HEK293 (cell line): ENCODE measurements at regions of chr19 and their contacts with region 1.

Region 1: DNA sequence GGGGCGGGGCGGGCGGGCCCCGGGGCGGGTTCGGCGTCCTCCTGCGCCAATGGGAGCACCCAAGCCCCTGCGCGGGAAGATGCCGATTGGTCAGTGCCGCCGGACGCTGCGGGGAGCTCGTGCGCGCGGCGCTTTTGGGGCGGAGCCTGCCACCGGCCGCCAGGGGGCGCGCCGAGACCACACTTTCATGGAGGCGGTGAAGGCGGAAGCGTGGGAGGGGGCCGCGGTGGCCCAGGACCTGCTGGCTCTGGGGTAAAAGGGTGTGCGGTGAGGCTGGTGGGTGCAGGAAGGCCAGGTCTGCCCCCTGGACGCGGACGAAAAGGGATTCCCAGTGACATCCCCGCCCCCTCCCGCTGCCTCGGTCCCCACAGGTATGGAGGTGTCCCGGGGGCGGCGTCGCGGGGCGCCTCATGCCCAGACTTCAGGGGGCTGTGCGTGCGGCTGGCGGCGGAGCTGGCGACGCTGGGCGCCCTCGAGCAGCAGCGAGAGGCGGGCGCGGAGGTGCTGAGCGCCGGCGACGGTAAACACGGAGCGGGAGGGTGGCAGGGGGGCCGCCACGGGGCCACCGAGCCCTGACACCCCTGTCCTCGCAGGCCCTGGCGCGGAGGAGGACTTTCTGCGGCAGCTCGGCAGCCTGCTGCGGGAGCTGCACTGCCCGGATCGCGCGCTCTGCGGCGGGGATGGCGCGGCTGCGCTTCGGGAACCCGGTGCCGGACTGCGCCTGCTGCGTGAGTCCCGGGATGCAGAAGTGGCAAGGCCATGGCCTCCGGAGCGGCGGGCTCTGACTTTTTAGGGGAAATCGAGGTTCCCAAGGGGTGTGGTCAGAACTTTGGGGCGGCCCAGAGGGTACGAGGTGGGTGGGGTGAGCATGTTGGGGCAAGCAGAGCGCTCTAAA is at the start of gene FAM98C:
- H3K4me3 ChIP-seq: peak within 1 kb of the TSS; percentile 57
- H3K27ac ChIP-seq: peak within 1 kb of the TSS; percentile 91
- H3K4me1 ChIP-seq: peaks cover 10% of the 10 kb centered on the region
- CTCF ChIP-seq: peak; percentile 100

Region 2: DNA sequence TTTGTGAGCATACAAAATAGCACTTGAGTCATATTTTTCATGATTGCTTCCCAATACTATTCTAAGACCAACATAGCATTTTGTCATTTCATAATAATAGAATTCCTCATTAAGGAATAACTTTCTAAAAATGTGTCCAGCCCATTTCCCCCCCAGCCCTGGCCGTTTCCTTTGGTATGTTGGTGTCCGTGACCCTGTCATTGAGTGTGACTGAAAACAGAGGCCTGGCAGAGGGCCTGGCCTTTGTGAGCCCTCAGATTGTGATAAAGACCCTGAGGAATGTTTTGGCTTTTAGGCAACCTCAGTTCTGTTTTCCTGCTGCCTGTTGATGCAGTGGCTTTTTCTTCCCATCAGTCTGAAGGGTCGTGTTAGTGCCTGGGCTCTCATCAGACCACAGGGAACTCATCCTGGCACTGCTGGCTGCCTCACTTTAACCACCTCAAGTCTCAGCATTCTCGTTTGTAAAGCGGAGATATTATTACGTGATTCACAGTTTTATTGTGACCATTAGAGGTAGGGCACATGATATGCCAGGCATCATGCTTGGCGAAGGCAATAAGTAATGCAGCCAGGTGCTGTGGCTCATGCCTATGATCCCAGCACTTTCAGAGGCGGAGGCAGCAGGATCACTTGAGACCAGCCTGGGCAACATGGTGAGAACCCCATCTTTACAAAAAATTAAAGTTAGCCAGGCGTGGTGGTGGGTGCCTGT is 125.1 kb before region 1 on chr19:
- CTCF ChIA-PET with region 1: no interaction called
- POLR2A ChIA-PET with region 1: no interaction called
- H3K4me3 ChIP-seq: no peak overlapping the region
- H3K27ac ChIP-seq: peak overlapping the region; percentile 50; the same call in 1 of the 2 replicates
- H3K4me1 ChIP-seq: peaks cover 13% of the 10 kb centered on the region
- CTCF ChIP-seq: no peak

Region 3: GRCh38 chr19:38374429-38375176 is 28.6 kb before region 1 on chr19 and contains the start of gene PSMD8:
- CTCF ChIA-PET with region 1: interaction called, 37 read pairs
- POLR2A ChIA-PET with region 1: interaction called, 50 read pairs
- H3K4me3 ChIP-seq: peak within 1 kb of the TSS; percentile 70
- H3K27ac ChIP-seq: peak within 1 kb of the TSS; percentile 93
- H3K4me1 ChIP-seq: peaks cover 20% of the 10 kb centered on the region
- CTCF ChIP-seq: peak; percentile 97

Region 4: DNA sequence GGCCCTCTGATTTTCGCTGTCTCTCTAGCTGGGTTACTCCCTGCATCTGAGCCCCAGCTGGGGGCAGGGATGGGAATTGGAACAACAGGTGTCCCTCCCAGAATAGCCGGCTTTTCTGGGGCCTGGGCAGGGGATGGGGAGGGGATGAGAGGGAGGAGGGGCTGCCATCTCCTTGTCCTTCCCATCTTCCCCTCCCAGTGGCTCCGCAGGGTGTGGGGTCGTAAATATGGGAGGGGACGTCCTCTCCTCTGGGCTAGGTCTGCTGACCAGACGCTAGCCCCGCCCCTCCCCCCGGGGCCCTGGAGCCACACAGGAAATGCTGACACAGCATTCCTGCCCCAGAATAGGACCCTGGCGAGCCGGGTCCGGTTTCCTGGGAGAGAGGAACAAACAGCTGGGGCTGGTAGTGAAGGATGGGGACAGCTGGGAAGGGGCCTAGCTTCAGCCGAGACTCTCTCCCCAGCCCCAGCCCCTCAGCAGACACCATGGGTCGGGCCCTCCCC is 31.4 kb after region 1 on chr19:
- CTCF ChIA-PET with region 1: interaction called, 12 read pairs
- POLR2A ChIA-PET with region 1: no interaction called
- H3K4me3 ChIP-seq: no peak overlapping the region
- H3K27ac ChIP-seq: no peak overlapping the region
- H3K4me1 ChIP-seq: peaks cover 12% of the 10 kb centered on the region
- CTCF ChIP-seq: no peak

Region 5: DNA sequence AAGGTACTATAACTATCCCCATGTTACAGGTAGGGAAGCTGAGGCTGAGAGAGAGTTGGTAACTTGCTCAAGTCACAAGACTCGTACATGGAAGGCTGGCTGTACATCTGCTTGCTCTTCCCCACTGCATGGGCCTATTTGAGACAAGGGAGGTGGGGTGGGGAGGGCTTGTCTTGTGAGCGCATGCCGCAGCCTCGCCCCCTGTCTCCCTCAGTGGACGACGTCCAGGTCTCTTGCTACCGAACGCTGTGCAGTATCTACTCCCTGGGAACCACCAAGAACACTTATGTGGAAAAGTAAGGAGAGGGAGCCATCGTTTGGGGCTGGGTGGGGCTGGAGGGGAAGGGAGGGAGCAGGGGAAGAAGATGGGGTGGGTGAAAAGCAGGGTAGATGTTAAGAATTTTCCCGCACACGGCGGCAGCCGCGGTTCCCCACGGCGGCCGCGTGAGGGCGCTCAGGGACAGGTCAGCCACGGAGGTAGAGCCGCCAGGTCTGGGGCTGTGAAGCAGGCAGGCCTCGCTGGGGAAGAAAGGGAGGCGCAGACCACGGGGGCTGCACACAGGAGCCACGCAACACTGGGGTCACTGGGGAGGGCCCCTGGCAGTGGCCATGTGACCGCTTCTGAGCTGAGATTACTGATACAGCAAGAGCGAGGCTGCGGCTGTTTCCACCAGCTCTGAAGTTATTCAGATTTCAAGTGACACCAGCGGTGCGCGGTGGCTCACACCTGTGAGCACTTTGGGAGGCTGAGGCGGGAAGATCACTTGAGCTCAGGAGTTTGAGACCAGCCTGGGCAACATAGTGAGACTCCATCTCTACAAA is 111.8 kb after region 1 on chr19:
- CTCF ChIA-PET with region 1: interaction called, 45 read pairs
- POLR2A ChIA-PET with region 1: interaction called, 7 read pairs
- H3K4me3 ChIP-seq: no peak overlapping the region
- H3K27ac ChIP-seq: no peak overlapping the region
- H3K4me1 ChIP-seq: no peaks in the 10 kb centered on the region
- CTCF ChIP-seq: peak; percentile 97

Region 6: DNA sequence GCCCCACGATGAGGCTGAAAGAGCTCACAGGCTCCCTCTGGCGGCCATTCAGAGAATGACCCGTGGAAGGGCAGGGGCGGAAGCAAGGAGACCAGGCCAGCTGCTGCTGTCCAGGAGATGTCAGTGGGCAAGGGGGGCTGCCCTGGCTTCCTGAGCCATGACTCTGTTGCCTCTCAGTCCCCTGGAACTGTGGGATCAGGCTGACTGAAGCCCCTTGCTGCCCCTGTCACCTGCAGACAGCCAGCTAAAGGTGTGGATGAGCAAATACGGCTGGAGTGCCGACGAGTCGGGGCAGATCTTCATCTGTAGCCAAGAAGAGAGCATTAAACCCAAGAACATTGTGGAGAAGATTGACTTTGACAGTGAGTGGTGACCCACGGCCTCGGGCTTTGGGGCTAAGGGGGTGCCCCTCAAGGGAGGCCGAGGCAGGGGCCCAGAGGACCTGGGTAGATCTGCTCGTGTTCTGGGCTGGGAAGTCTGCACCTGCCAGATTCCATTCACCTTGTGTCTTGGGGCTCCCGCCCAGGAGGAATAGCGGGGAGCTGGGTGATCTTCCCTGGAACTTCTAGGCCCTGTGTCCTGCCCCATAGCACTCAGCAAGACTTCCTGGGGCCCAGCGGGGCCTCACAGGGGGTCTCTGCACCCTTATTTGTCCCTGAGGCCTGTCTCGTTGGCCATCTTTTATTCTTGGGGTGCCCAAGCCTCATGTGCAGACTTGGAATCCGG is 231.7 kb after region 1 on chr19:
- CTCF ChIA-PET with region 1: interaction called, 77 read pairs
- POLR2A ChIA-PET with region 1: interaction called, 21 read pairs
- H3K4me3 ChIP-seq: no peak overlapping the region
- H3K27ac ChIP-seq: peak overlapping the region; percentile 31; the same call in 1 of the 2 replicates
- H3K4me1 ChIP-seq: no peaks in the 10 kb centered on the region; the same call in 1 of the 2 replicates
- CTCF ChIP-seq: peak; percentile 96

Region 7: GRCh38 chr19:38929929-38930775 is 526.9 kb after region 1 on chr19 and contains the start of gene SARS2:
- CTCF ChIA-PET with region 1: interaction called, 34 read pairs
- POLR2A ChIA-PET with region 1: interaction called, 16 read pairs
- H3K4me3 ChIP-seq: peak within 1 kb of the TSS; percentile 70
- H3K27ac ChIP-seq: peak within 1 kb of the TSS; percentile 81
- H3K4me1 ChIP-seq: peaks cover 10% of the 10 kb centered on the region; the same call in 1 of the 2 replicates
- CTCF ChIP-seq: peak; percentile 100